Prostate gland (tissue), 2 donors: ENCODE measurements at regions of chr11 and their contacts with region 1.

Region 1: DNA sequence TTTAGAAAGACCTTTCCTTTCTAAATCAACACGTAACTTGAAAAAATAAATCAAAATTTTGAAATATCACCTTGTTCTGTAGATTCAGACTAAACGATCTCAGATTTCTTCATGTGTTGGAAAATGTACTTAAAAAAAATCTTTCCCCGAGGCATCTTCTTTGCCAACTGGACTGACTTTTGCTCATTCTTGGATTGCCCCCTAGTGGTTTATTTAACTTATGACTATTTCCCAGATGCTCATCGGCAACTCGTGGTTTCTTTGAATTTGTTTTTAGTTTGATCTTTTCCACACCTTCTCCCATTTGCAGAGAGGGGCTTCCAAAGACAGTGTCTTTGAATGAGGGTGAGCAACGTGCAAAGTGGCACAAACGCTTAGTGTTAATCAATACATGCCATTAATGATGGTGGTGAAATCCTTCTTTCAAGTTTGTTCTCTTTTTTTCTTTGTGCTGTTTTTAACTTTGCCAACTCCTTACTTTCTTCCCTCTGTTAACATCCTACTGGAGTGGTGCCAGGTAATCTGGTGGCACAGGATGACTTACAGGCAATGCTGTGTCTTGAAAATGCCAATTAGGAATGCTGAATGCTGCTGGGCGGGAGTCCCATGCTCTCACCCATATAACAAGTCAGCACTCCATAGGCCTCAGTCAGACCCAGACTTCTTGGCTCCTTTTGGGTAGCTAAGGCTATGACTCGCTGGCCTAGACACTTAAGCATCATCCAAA is 18.3 kb downstream of the PRSS23 start:
- DNase-seq: peak; percentile 31
- H3K4me3 ChIP-seq: no peak overlapping the region
- H3K27ac ChIP-seq: no peak overlapping the region
- H3K4me1 ChIP-seq: no peaks in the 10 kb centered on the region
- H3K27me3 ChIP-seq: no peaks in the 10 kb centered on the region
- CTCF ChIP-seq: peak; percentile 62 to 88 (median 83)
- POLR2A ChIP-seq: no peak

Region 2: GRCh38 chr11:86608251-86608799 is 210.3 kb before region 1 on chr11:
- intact Hi-C with region 1: loop called (anchors 5 kb)
- DNase-seq: peak; percentile 49
- H3K4me3 ChIP-seq: no peak overlapping the region
- H3K27ac ChIP-seq: no peak overlapping the region
- H3K4me1 ChIP-seq: no peaks in the 10 kb centered on the region
- H3K27me3 ChIP-seq: no peaks in the 10 kb centered on the region
- CTCF ChIP-seq: peak; percentile 76 to 84 (median 78)
- POLR2A ChIP-seq: no peak